Activated CD4-positive, alpha-beta memory T cell treated with anti-CD3 and anti-CD28 coated beads for 36 hours (primary cell): ENCODE measurements at regions of chr7 and their contacts with region 1.

Region 1: GRCh38 chr7:17298207-17298839 is at the start of gene AHR:
- DNase-seq: peak; percentile 95
- H3K4me3 Mint-ChIP-seq: peak within 1 kb of the TSS; percentile 90
- H3K27ac Mint-ChIP-seq: peak within 1 kb of the TSS; percentile 93
- H3K4me1 Mint-ChIP-seq: peaks cover 18% of the 10 kb centered on the region
- H3K27me3 Mint-ChIP-seq: no peaks in the 10 kb centered on the region
- total RNA-seq, gene AHR: 40.9 to 43.3 TPM

Region 2: DNA sequence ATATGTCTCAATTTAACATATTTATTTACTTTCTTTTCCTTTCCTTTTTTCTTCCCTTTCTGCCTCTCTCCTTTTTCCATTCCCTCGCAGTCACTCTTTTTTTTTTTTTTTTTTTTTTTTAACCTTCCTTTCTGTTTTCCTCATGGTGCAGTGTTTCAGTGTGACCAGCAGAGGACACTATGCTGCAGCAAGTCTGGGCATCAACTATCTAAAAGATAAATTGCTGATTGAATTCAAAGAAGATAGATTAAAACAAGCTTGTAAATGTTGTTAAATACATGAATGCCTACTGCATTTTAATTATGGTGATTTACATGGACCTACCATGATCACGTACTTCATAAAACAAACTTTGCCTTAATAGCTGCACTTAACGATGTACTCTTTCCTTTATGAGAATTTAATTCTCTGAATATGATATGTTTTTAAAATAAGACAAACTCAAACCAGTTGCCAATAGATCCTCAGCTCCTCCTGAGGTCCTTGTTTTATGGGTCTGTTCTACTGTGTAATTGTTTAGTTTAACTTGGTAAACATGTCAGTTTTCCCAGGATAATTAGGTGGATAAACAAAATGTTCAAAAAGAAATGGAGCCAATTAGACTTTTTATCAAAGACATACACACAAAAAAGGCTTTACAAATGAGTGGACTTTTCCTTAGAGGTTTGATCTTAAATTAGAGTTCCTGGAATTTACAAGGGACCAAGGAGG is 315.5 kb before region 1 on chr7:
- CTCF ChIA-PET with region 1: interaction called, 36 read pairs
- POLR2A ChIA-PET with region 1: no interaction called
- intact Hi-C with region 1: loop called (anchors 1 kb)
- DNase-seq: peak; percentile 34
- H3K4me3 Mint-ChIP-seq: no peak overlapping the region
- H3K27ac Mint-ChIP-seq: no peak overlapping the region
- H3K4me1 Mint-ChIP-seq: peaks cover 2% of the 10 kb centered on the region
- H3K27me3 Mint-ChIP-seq: peaks cover 4% of the 10 kb centered on the region

Region 3: DNA sequence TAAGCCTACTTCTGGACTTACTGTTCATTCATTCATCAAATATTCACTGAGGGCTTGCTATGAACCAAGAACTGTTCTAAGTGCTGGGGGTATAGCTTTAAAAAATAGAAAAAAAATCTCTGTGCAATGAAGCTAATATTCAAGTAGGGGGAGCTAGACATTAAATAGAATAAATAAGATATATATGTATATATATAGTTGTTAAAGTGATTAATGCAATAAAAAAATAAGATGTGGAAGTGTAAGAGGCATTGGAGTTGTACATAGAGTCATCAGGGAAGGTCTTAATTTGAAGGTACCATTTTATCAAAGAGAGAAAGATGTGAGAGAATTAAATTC is 235.3 kb before region 1 on chr7:
- CTCF ChIA-PET with region 1: interaction called, 9 read pairs
- POLR2A ChIA-PET with region 1: no interaction called
- intact Hi-C with region 1: loop called (anchors 2 kb)
- DNase-seq: no peak
- H3K4me3 Mint-ChIP-seq: no peak overlapping the region
- H3K27ac Mint-ChIP-seq: no peak overlapping the region
- H3K4me1 Mint-ChIP-seq: peaks cover 14% of the 10 kb centered on the region
- H3K27me3 Mint-ChIP-seq: no peaks in the 10 kb centered on the region

Region 4: DNA sequence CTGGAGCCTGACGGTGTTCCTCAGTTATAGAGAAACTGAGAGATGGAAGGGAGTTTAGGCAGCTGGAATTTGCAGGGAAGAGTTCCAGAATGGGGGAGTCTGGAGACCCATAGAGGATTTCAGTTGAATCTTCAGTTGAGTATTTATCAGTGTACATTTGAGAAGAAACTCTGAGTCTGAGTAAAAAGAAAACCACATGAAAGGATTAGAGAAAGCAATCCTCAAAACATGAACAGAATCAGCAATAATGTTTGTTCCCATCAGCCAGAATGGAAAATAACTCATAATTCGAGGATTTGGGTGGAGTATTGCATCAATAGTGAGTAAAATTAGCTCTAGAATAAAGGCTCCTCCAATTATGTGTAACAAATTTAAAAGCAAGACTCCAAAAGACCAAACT is 129.9 kb before region 1 on chr7:
- CTCF ChIA-PET with region 1: interaction called, 4 read pairs
- POLR2A ChIA-PET with region 1: no interaction called
- intact Hi-C with region 1: loop called (anchors 1 kb)
- DNase-seq: no peak
- H3K4me3 Mint-ChIP-seq: no peak overlapping the region
- H3K27ac Mint-ChIP-seq: no peak overlapping the region
- H3K4me1 Mint-ChIP-seq: peaks cover 25% of the 10 kb centered on the region
- H3K27me3 Mint-ChIP-seq: no peaks in the 10 kb centered on the region

Region 5: DNA sequence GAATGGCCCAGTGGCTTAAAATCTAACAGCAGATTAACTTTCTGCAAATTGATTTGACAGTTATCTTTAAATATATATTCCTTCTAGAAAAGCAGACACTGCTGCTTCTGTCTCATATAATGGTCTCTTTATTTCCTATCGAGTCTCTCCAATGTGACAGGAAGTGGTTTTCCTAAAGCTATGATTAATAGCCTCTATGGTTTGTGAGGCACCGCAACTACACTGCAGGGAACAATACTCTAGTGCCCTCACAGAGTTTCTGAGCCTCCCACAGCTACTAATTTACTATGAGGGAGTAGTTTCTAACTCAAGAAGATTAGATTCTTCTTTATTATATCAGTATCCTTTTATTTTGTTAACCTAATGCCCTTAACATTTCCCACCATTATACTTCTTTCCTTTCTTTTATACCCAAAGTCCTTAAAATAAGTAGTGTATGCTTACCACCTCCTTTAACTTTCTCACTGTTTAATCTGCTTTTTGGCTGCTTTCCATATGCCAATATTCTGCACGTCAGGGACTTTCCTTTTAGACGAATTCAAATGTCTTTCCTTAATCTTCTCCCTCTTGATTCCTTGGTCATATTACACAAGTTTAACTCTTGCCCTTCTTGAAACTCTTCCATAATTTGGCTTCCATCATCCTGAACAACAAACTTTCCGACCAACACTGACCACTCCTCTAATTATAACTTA is 23.6 kb before region 1 on chr7:
- CTCF ChIA-PET with region 1: interaction called, 6 read pairs
- POLR2A ChIA-PET with region 1: interaction called, 3 read pairs
- intact Hi-C with region 1: loop called (anchors 1 kb)
- DNase-seq: peak; percentile 42
- H3K4me3 Mint-ChIP-seq: no peak overlapping the region
- H3K27ac Mint-ChIP-seq: no peak overlapping the region
- H3K4me1 Mint-ChIP-seq: peaks cover 19% of the 10 kb centered on the region
- H3K27me3 Mint-ChIP-seq: no peaks in the 10 kb centered on the region

Region 6: DNA sequence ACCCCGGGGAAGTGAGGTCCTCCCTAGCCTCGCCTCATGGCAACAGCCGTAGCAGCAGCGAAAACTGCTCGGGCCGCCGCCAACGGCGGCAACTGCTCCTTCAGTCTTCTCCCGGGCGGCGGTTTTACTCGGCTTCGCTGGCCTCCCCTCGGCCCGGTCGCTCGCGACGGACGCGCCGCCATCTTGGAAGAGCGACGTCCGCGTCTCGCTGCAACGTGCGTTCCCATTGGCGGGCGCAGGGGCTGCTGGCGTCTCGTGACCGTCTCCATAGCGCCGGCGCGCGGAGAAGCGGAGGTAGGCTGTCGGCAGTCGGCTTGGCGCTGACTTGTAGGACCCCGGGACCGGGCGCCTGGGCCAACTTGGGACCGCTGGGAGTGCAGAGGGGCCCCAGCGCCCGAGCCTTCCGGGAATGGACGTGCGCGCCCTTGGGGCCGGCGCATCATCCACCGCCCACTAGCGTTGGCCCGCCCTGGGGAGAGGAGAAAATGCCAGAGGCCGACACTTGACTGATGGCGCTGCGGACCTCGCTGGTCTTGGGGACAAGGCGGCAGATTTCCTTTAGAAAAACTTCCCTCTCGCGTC is 642.1 kb after region 1 on chr7 and contains the start of gene SNX13:
- CTCF ChIA-PET with region 1: no interaction called
- POLR2A ChIA-PET with region 1: no interaction called
- intact Hi-C with region 1: loop called (anchors 5 kb)
- DNase-seq: peak; percentile 92
- H3K4me3 Mint-ChIP-seq: peak within 1 kb of the TSS; percentile 98
- H3K27ac Mint-ChIP-seq: peak within 1 kb of the TSS; percentile 94
- H3K4me1 Mint-ChIP-seq: peaks cover 40% of the 10 kb centered on the region
- H3K27me3 Mint-ChIP-seq: no peaks in the 10 kb centered on the region
- total RNA-seq, gene SNX13: 18.6 to 19.8 TPM